Uterus (tissue), 4 donors: ENCODE measurements at regions of chr7 and their contacts with region 1.

Region 1: DNA sequence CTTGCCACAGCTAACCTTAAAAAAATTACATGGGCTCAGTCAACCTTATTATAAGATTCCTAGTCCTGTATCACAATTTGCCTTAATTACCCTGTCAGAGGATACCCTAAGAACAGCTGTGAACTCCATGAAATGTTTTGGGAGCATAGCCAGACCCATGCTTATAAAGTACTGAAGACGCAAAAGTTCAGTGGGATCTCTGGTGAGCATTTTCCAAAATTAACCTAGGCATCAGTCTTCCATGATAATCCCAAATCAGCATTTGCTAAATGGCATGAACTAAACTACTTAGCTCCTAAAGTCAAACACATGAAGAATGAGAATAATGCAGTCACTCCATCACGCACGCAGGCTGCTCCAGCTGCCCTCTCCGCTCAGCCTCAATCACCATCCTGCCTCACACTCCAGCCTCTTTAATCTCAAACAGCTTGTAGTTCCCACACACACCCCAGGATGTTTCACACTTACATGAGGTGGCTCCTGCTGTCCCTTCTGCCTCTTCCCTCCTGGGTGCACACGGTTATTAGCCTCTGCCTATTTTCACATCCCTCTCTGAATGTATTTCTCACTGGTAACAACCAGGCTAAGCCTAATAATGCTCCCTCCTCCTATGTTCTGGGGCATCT is 15.3 kb downstream of the IGF2BP3 start:
- DNase-seq: no peak
- H3K4me3 ChIP-seq: no peak overlapping the region
- H3K27ac ChIP-seq: no peak overlapping the region
- H3K4me1 ChIP-seq: no peaks in the 10 kb centered on the region
- H3K27me3 ChIP-seq: peaks cover 0 to 5% of the 10 kb centered on the region in 2 donors
- CTCF ChIP-seq: no peak
- POLR2A ChIP-seq: no peak

Region 2: GRCh38 chr7:23175938-23176337 is 279.1 kb before region 1 on chr7:
- intact Hi-C with region 1: loop called (anchors 5 kb)
- DNase-seq: no peak
- H3K4me3 ChIP-seq: no peak overlapping the region
- H3K27ac ChIP-seq: no peak overlapping the region
- H3K4me1 ChIP-seq: no peaks in the 10 kb centered on the region
- H3K27me3 ChIP-seq: no peaks in the 10 kb centered on the region
- CTCF ChIP-seq: no peak
- POLR2A ChIP-seq: no peak

Region 3: DNA sequence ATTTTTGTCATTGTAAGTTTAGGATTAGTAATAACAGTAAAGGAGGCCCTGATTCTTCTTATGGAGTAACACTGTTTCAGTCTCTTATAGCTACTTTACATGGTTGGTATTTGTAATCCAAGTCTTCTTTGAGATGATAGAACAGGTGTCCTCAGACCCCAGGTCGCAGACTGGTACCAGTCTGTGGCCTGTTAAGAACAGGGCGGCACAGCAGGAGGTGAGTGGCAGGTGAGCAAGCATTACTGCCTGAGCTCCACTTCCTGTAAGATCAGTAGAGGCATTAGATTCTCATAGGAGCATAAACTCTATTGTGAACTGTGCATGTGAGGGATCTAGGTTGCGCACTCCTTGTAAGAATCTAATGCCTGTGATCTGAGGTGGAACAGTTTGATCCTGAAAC is 332.3 kb after region 1 on chr7:
- intact Hi-C with region 1: no loop called
- DNase-seq: no peak
- H3K4me3 ChIP-seq: no peak overlapping the region
- H3K27ac ChIP-seq: no peak overlapping the region
- H3K4me1 ChIP-seq: no peaks in the 10 kb centered on the region
- H3K27me3 ChIP-seq: no peaks in the 10 kb centered on the region
- CTCF ChIP-seq: no peak
- POLR2A ChIP-seq: no peak